ENCODE measurements at regions of chr4 and their contacts with region 1.

Region 1: GRCh38 chr4:110631584-110632505 is 9.0 kb upstream of the PITX2 start:
- DNase-seq: peak; percentile 92
- H3K4me3 ChIP-seq: peak overlapping the region; percentile 40
- H3K27ac ChIP-seq: no peak overlapping the region
- H3K4me1 ChIP-seq: no peaks in the 10 kb centered on the region
- H3K27me3 ChIP-seq: peaks cover 4% of the 10 kb centered on the region
- CTCF ChIP-seq: peak; percentile 97

Region 2: DNA sequence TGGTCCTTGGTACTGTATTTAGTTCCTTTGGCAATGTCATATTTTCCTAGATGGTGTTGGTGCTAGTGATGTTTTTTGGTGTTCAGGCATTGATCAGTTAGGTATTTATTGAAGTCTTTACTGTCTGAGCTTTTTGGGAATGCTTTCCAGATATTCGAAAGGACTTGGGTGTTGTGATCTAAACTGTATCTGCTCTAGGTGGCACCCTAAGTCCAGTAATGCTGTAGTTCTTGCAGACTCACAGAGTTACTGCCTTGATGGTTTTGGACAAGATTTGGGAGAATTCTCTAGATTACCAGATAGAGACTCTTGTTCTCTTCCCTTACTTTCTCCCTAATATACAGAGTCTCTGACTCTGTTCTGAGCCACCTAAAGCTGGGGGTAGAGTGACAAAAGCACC is 504.6 kb after region 1 on chr4:
- CTCF ChIA-PET with region 1: no interaction called
- POLR2A ChIA-PET with region 1: no interaction called
- intact Hi-C with region 1: loop called (anchors 5 kb)
- DNase-seq: peak; percentile 45
- H3K4me3 ChIP-seq: no peak overlapping the region
- H3K27ac ChIP-seq: no peak overlapping the region
- H3K4me1 ChIP-seq: no peaks in the 10 kb centered on the region
- H3K27me3 ChIP-seq: no peaks in the 10 kb centered on the region
- CTCF ChIP-seq: peak; percentile 45

Region 3: GRCh38 chr4:111441687-111442086 is 809.8 kb after region 1 on chr4:
- CTCF ChIA-PET with region 1: no interaction called
- POLR2A ChIA-PET with region 1: no interaction called
- intact Hi-C with region 1: no loop called
- DNase-seq: no peak
- H3K4me3 ChIP-seq: no peak overlapping the region
- H3K27ac ChIP-seq: no peak overlapping the region
- H3K4me1 ChIP-seq: no peaks in the 10 kb centered on the region
- H3K27me3 ChIP-seq: no peaks in the 10 kb centered on the region
- CTCF ChIP-seq: no peak

Region 4: DNA sequence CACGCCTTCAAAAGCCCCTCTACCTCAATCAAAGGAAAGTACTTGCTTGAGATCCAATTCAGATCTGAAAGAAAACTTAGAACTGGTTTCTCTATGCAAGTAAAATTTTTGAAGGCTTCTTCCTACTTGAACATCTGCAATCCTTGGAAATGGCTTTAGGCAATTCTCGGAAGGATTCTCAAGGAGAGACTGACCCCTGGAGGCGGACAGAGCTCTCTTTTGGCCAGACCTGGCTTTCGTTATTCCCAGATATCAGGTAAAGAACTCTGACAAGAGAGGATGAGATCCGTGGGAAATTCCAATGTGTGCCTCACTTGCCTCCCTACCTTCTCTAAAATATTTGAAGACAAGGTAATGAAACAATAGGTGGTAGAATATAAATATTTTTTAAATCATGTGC is 843.2 kb after region 1 on chr4:
- CTCF ChIA-PET with region 1: no interaction called
- POLR2A ChIA-PET with region 1: no interaction called
- intact Hi-C with region 1: loop called (anchors 5 kb)
- DNase-seq: peak; percentile 31
- H3K4me3 ChIP-seq: no peak overlapping the region
- H3K27ac ChIP-seq: no peak overlapping the region
- H3K4me1 ChIP-seq: no peaks in the 10 kb centered on the region
- H3K27me3 ChIP-seq: no peaks in the 10 kb centered on the region
- CTCF ChIP-seq: peak; percentile 54

Region 5: DNA sequence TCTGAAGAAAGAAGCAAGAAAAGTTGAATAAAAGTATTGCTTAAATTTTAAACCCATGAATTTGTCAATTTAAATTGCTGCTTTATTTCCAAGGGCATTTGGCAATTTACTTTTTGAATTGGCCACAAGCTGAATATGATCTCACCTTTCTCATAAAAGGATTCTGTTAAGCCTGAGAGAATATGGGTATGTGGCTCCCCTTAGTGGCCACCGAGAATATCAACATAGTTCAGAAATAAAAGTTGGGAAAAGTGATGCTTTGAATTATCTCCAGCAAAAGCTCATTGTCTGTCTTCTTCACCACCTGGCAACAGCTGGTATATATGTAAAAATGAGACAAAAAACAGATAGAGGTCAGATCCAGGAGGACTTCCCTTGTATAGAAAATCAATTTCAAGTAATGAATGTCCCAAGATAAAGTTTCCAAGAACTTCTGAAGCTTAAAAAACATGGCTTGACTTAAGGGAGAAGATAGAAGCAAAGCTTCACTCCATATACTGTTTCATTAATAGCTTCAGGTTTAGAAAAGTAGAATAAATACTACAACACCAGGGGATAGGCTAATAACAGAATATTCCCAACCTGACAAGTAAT is 1222.7 kb after region 1 on chr4:
- CTCF ChIA-PET with region 1: no interaction called
- POLR2A ChIA-PET with region 1: no interaction called
- intact Hi-C with region 1: loop called (anchors 2 kb)
- DNase-seq: peak; percentile 48
- H3K4me3 ChIP-seq: no peak overlapping the region
- H3K27ac ChIP-seq: no peak overlapping the region
- H3K4me1 ChIP-seq: no peaks in the 10 kb centered on the region
- H3K27me3 ChIP-seq: no peaks in the 10 kb centered on the region
- CTCF ChIP-seq: peak; percentile 76

Region 6: DNA sequence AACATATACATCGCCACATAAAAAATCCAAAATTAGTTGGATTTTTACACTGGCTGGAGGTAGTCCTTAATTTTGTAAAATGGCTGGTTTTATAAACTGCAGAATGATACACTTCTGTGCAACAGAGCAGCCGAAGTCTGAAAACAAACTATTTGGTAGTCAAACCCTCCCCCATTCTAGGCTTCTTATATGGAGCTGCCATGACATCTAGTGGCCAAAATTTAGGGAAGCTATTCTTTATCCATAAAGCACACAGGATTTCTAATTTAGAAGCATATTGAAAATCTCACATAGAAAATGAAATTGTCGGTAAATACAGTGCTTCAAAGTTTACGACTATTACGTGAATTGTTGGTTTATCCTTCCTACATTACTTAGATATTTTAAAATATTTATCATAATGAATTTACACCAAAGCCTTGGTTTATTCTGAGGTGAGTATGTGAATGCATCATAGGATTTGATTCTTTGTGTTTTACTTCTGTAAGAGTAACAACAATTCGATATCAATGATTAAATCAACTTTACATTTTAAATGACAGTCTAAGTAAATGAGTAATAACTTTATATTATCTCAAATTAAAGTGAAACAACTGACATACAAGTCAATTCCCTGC is 1400.0 kb after region 1 on chr4:
- CTCF ChIA-PET with region 1: no interaction called
- POLR2A ChIA-PET with region 1: no interaction called
- intact Hi-C with region 1: loop called (anchors 5 kb)
- DNase-seq: peak; percentile 76
- H3K4me3 ChIP-seq: no peak overlapping the region
- H3K27ac ChIP-seq: no peak overlapping the region
- H3K4me1 ChIP-seq: peaks cover 17% of the 10 kb centered on the region
- H3K27me3 ChIP-seq: no peaks in the 10 kb centered on the region
- CTCF ChIP-seq: peak; percentile 78